Naive thymus-derived CD4-positive, alpha-beta T cell (primary cell): ENCODE measurements at regions of chr16 and their contacts with region 1.

Region 1: GRCh38 chr16:81314603-81315270 is at the start of gene GAN:
- DNase-seq: peak; percentile 83 to 96 (median 93)
- ATAC-seq: peak; percentile 99
- H3K4me3 ChIP-seq: peak within 1 kb of the TSS; percentile 89
- H3K4me3 Mint-ChIP-seq: peak within 1 kb of the TSS; percentile 89 to 99 (median 96)
- H3K27ac ChIP-seq: peak within 1 kb of the TSS; percentile 78
- H3K27ac Mint-ChIP-seq: peak within 1 kb of the TSS; percentile 85 to 98 (median 94)
- H3K4me1 ChIP-seq: peaks cover 15 to 17% of the 10 kb centered on the region in 2 donors
- H3K4me1 Mint-ChIP-seq: peaks cover 37 to 70% (median 59%) of the 10 kb centered on the region in 7 donors
- H3K27me3 ChIP-seq: no peaks in the 10 kb centered on the region
- H3K27me3 Mint-ChIP-seq: no peaks in the 10 kb centered on the region
- total RNA-seq, gene GAN: 5.1 to 11.3 (median 7.9) TPM

Region 2: DNA sequence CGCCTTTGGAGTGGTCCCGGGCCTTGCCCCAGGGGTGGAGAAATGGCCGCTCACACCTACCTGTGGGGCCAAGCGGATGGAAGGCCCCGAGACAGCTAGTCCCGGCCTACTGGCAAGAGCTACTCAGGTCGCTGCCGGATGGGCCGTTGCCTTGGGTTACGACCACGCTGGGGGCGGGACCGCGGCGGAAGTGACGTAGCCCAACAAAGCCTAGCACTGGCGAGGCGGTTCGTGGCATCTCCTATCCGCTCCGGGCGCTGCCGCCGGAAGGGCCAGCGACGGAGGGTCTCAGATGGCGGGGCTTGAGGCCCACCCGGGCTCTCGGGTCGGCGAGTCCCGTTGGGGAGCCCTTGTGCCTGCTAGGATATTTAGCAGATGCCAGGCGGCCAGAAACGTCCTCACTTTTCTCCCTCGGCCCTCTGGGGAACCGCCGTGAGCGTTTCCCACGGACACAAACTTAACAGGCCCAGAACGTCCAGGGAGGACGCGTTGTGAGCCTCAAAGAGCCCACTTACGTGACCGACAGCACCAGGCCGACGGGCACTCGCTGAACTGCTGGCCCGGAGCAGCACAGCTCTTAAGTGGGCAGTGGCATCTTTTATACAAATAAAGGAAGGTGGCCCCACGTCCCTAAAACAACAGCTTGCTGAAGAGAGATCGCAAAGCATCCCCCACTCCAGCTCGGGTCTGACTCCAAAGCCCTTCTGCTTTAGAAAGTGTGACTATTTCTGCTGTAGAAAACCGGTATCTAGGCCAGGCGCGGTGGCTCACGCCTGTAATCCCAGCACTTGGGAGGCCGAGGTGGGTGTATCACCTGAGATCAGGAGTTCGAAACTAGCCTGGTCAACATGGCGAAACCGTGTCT is 237.4 kb before region 1 on chr16 and contains the start of gene C16orf46:
- CTCF ChIA-PET with region 1: no interaction called
- POLR2A ChIA-PET with region 1: interaction called, 8 read pairs
- intact Hi-C with region 1: loop called (anchors 1 kb)
- DNase-seq: peak; percentile 93 to 99 (median 97)
- ATAC-seq: peak; percentile 85
- H3K4me3 ChIP-seq: peak within 1 kb of the TSS; percentile 96
- H3K4me3 Mint-ChIP-seq: peak within 1 kb of the TSS in 2 of 10 donors; percentile 39 to 57
- H3K27ac ChIP-seq: peak within 1 kb of the TSS; percentile 89
- H3K27ac Mint-ChIP-seq: peak within 1 kb of the TSS in 2 of 9 donors; percentile 89 to 91
- H3K4me1 ChIP-seq: peaks cover 10 to 11% of the 10 kb centered on the region in 2 donors
- H3K4me1 Mint-ChIP-seq: peaks cover 0 to 4% (median 0%) of the 10 kb centered on the region in 7 donors
- H3K27me3 ChIP-seq: no peaks in the 10 kb centered on the region
- H3K27me3 Mint-ChIP-seq: peaks cover 0 to 10% (median 0%) of the 10 kb centered on the region in 5 donors
- total RNA-seq, gene C16orf46: 0.24 to 2.1 (median 0.70) TPM in 4 of 5 experiments, not detected in the other

Region 3: GRCh38 chr16:81261049-81261648 is 53.6 kb before region 1 on chr16:
- CTCF ChIA-PET with region 1: no interaction called
- POLR2A ChIA-PET with region 1: no interaction called
- intact Hi-C with region 1: loop called in 1 of 2 experiments (anchors 1 kb)
- DNase-seq: peak in 4 of 9 donors; percentile 2 to 16 (median 6)
- ATAC-seq: peak; percentile 31
- H3K4me3 ChIP-seq: no peak overlapping the region
- H3K4me3 Mint-ChIP-seq: no peak overlapping the region
- H3K27ac ChIP-seq: no peak overlapping the region
- H3K27ac Mint-ChIP-seq: no peak overlapping the region
- H3K4me1 ChIP-seq: no peaks in the 10 kb centered on the region
- H3K4me1 Mint-ChIP-seq: peaks cover 0 to 4% (median 0%) of the 10 kb centered on the region in 7 donors
- H3K27me3 ChIP-seq: no peaks in the 10 kb centered on the region
- H3K27me3 Mint-ChIP-seq: peaks cover 0 to 11% (median 5%) of the 10 kb centered on the region in 5 donors

Region 4: DNA sequence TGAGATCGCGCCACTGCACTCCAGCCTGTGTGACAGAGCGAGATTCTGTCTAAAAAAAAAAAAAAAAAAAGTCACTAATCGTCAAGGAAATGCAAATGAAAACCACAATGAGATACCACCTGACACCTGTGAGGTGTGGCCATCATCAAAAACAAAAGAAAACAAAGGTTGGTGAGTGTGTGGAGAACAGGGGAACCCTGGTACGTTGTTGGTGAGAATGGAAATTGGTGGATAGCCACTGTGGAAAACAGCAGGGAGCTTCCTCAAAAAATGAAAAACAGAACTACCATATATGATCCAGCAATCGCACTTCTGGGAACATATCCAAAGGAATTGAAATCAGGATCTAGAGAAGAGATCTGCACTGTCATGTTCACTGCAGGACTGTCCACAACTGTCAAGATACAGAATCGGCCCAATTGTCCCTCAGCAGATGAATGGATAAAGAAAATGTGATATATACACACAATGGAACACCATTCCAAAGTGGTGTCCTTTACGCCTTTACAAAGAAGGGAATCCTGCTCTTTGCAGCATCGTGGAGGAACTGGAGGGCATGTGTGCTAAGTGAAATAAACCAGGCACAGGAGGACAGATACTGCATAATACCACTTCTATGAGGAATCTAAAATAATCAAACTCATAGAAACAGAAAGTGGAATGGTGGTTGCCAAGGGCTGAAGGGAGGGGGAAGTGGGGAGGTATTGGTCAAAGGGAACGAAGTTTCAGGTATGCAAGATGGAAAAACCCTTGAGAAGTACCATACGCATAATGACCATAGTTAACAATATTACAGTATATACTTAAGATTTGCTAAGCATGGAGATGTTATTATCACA is 400.8 kb after region 1 on chr16:
- CTCF ChIA-PET with region 1: no interaction called
- POLR2A ChIA-PET with region 1: no interaction called
- intact Hi-C with region 1: loop called (anchors 2 to 5 kb)
- DNase-seq: peak in 7 of 9 donors; percentile 47 to 70 (median 68)
- ATAC-seq: peak; percentile 73
- H3K4me3 ChIP-seq: peak overlapping the region; percentile 7
- H3K4me3 Mint-ChIP-seq: peak overlapping the region; percentile 53 to 83 (median 75)
- H3K27ac ChIP-seq: no peak overlapping the region
- H3K27ac Mint-ChIP-seq: peak overlapping the region; percentile 66 to 96 (median 88)
- H3K4me1 ChIP-seq: peaks cover 25 to 35% of the 10 kb centered on the region in 2 donors
- H3K4me1 Mint-ChIP-seq: peaks cover 35 to 54% (median 43%) of the 10 kb centered on the region in 7 donors
- H3K27me3 ChIP-seq: no peaks in the 10 kb centered on the region
- H3K27me3 Mint-ChIP-seq: no peaks in the 10 kb centered on the region

Region 5: GRCh38 chr16:81745704-81746558 is 431.2 kb after region 1 on chr16:
- CTCF ChIA-PET with region 1: no interaction called
- POLR2A ChIA-PET with region 1: no interaction called
- intact Hi-C with region 1: loop called (anchors 1 to 2 kb)
- DNase-seq: peak; percentile 53 to 75 (median 71)
- ATAC-seq: peak; percentile 97
- H3K4me3 ChIP-seq: peak overlapping the region; percentile 66
- H3K4me3 Mint-ChIP-seq: peak overlapping the region; percentile 82 to 90 (median 86)
- H3K27ac ChIP-seq: peak overlapping the region; percentile 65
- H3K27ac Mint-ChIP-seq: peak overlapping the region; percentile 83 to 95 (median 88)
- H3K4me1 ChIP-seq: peaks cover 4 to 10% of the 10 kb centered on the region in 2 donors
- H3K4me1 Mint-ChIP-seq: peaks cover 6 to 33% (median 10%) of the 10 kb centered on the region in 7 donors
- H3K27me3 ChIP-seq: no peaks in the 10 kb centered on the region
- H3K27me3 Mint-ChIP-seq: peaks cover 0 to 6% (median 0%) of the 10 kb centered on the region in 5 donors

Region 6: DNA sequence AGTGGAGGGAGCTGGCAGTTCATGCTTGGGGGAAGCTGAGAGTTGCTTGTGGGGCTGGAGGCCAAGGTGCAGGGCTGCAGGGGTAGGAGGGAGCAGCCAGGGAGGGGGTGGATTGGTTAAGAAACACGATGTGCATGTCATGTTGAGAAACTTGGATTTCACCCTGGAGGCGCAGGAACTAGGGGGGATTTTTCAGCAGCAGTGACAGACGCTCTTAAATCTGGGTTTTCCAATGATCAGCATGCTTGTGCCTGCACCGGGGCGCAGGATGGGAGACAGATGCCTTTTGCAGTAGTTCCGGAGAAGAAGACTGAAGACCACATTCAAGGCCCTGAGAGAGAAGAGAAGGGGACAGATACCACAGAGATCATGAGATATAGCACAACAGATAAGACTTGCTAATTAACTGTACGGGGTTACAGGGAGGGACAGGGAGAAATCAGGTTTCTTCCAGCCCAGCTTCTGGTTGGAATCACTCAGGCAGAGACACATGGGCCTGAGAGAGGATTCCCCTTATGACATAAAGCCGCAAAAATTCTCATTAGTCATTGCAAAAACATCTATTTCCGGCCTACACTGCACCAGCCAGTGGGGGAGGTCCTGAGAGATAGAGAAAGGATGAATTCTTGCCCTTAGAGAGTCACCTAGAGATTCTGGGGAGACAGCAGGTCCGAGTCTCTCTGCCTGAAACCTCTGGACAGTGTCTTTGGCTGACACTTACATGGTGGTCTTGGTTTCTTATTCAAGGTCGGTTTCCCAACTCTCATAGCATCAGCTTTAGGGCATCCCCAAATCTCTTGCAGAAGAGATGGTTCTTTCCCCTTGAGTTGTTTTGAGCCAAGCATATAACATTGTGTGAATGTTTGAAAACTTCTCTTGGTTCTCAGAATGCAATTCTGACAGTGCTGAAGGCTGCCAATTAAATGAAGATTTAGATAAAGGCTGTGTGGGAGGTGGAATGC is 1339.1 kb after region 1 on chr16:
- CTCF ChIA-PET with region 1: no interaction called
- POLR2A ChIA-PET with region 1: no interaction called
- intact Hi-C with region 1: loop called in 1 of 2 experiments (anchors 10 kb)
- DNase-seq: peak in 8 of 9 donors; percentile 11 to 54 (median 36)
- ATAC-seq: peak; percentile 70
- H3K4me3 ChIP-seq: peak overlapping the region; percentile 2
- H3K4me3 Mint-ChIP-seq: peak overlapping the region; percentile 27 to 77 (median 62)
- H3K27ac ChIP-seq: peak overlapping the region; percentile 57
- H3K27ac Mint-ChIP-seq: peak overlapping the region; percentile 48 to 95 (median 87)
- H3K4me1 ChIP-seq: peaks cover 71 to 88% of the 10 kb centered on the region in 2 donors
- H3K4me1 Mint-ChIP-seq: peaks cover 43 to 97% (median 84%) of the 10 kb centered on the region in 7 donors
- H3K27me3 ChIP-seq: no peaks in the 10 kb centered on the region
- H3K27me3 Mint-ChIP-seq: no peaks in the 10 kb centered on the region